MCF 10A (cell line): ENCODE measurements at regions of chr1 and their contacts with region 1.

Region 1: DNA sequence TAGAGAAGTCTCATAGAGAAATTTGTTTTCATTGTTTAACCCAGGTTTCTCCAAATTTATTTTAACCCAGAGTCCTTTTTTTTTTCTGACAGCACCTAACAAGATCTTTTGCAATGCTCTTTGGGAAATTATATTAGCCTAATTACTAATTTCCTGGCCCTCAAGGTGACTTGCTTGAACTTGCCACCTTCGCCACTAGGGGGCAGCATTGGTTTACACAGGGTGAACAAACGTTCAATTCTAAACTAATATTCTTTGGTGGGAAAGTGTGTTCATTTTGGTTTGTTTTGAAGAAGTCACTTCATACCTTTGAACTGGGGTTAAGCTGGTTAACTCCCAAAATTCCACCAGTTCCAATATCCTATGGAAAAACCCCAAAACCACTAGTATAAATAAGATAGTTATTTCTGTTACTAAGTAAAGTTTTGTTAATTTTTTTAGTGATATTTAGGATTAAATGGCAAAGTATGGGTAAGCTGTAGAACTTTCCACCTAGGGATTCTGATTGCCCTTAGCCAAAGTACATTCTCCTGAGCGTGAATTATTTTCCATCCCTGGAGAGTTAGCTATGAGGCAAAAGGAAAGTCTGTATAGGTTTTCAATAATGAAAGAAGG is 13.0 kb downstream of the CCDC190 start:
- DNase-seq: peak; percentile 92
- H3K4me3 Mint-ChIP-seq: no peak overlapping the region
- H3K27ac Mint-ChIP-seq: no peak overlapping the region
- H3K4me1 Mint-ChIP-seq: peaks cover 7% of the 10 kb centered on the region
- H3K27me3 Mint-ChIP-seq: peaks cover 24% of the 10 kb centered on the region
- CTCF ChIP-seq: peak; percentile 96

Region 2: DNA sequence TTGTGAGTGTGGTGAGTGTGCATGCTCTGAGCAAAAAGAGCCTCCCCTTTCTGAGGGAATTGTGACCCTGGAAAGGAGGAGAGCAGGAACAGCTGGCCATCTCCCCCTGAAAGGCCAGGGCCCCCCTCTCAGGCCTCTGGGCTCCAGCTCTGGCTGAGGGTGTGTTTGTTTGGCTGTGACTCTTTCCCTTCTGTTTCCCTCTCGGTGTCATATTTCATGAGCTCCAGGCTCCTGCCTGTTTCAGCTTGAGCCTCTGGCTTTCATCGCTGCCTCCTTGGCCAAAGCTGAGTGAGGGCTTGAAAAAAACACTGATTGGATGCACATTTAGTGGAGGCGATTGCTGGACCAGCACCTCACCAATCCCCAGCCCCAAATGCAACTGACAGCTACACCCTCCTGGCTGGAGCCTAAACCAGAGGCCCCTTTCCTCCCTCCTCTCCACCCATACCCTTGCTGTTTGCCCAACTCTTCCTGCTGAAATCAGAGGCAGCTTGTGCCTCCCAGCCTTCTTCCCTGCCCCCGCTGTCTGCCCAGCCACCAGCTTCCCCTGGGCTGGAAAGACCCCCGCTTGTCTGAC is 151.6 kb before region 1 on chr1:
- CTCF ChIA-PET with region 1: no interaction called
- POLR2A ChIA-PET with region 1: no interaction called
- intact Hi-C with region 1: no loop called
- DNase-seq: peak; percentile 97
- H3K4me3 Mint-ChIP-seq: peak overlapping the region; percentile 10
- H3K27ac Mint-ChIP-seq: peak overlapping the region; percentile 36
- H3K4me1 Mint-ChIP-seq: peaks cover 33% of the 10 kb centered on the region
- H3K27me3 Mint-ChIP-seq: no peaks in the 10 kb centered on the region
- CTCF ChIP-seq: no peak

Region 3: GRCh38 chr1:162835157-162835899 is 12.6 kb before region 1 on chr1:
- CTCF ChIA-PET with region 1: interaction called, 45 read pairs
- POLR2A ChIA-PET with region 1: interaction called, 3 read pairs
- intact Hi-C with region 1: no loop called
- DNase-seq: no peak
- H3K4me3 Mint-ChIP-seq: no peak overlapping the region
- H3K27ac Mint-ChIP-seq: no peak overlapping the region
- H3K4me1 Mint-ChIP-seq: no peaks in the 10 kb centered on the region
- H3K27me3 Mint-ChIP-seq: peaks cover 15% of the 10 kb centered on the region
- CTCF ChIP-seq: no peak

Region 4: GRCh38 chr1:162886705-162887104 is 38.8 kb after region 1 on chr1:
- CTCF ChIA-PET with region 1: interaction called, 15 read pairs
- POLR2A ChIA-PET with region 1: no interaction called
- intact Hi-C with region 1: no loop called
- DNase-seq: no peak
- H3K4me3 Mint-ChIP-seq: no peak overlapping the region
- H3K27ac Mint-ChIP-seq: no peak overlapping the region
- H3K4me1 Mint-ChIP-seq: no peaks in the 10 kb centered on the region
- H3K27me3 Mint-ChIP-seq: no peaks in the 10 kb centered on the region
- CTCF ChIP-seq: no peak

Region 5: DNA sequence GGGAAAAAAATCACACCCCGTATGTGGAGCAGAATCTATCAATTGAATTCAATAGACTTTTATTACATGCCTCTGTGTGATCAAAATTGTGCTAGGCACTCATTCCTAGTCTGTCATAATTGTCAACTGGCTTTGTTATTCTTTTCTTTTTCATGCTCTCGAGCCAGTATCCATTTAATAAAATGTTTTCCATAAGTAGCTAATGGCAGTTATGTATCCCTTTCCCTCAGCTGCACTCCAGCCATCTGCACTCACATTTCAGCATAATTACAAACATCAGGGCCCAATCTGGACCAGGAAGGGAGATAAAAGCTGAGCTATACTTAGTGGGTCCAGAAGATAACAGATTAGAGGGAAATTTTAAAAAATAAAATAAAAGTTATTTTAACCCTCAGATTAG is 338.9 kb after region 1 on chr1:
- CTCF ChIA-PET with region 1: interaction called, 13 read pairs
- POLR2A ChIA-PET with region 1: no interaction called
- intact Hi-C with region 1: no loop called
- DNase-seq: no peak
- H3K4me3 Mint-ChIP-seq: no peak overlapping the region
- H3K27ac Mint-ChIP-seq: no peak overlapping the region
- H3K4me1 Mint-ChIP-seq: no peaks in the 10 kb centered on the region
- H3K27me3 Mint-ChIP-seq: no peaks in the 10 kb centered on the region
- CTCF ChIP-seq: no peak

Region 6: DNA sequence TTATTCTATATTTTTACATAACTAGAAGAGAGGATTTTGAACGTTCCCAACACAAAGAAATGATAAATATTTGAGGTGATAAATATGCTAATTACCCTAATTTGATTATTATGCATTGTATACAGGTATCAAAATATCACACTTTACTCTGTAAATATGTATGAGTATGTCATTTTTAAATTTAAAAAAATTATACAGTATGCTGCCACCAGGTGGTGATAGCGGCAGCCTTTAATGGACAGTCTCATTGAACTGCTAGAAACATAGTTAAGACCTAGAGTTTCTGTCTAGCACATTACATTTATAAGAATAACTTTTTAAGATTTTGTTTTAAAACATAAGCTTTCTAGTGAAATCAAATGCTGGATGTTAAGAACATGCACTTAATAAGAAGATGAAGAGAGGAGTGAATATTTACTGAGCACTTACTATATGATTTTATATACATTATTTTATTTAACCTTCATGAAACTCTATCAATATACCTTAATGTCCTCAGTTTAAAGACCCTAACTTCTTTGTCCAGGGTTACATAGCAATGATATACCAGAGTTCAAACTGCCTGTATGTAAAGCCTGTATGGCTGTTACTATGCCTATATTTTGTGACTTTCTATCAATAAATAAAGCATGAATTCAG is 680.9 kb after region 1 on chr1:
- CTCF ChIA-PET with region 1: interaction called, 5 read pairs
- POLR2A ChIA-PET with region 1: no interaction called
- intact Hi-C with region 1: loop called (anchors 5 kb)
- DNase-seq: peak; percentile 62
- H3K4me3 Mint-ChIP-seq: no peak overlapping the region
- H3K27ac Mint-ChIP-seq: no peak overlapping the region
- H3K4me1 Mint-ChIP-seq: no peaks in the 10 kb centered on the region
- H3K27me3 Mint-ChIP-seq: no peaks in the 10 kb centered on the region
- CTCF ChIP-seq: peak; percentile 66